ENCODE measurements at regions of chr3 and their contacts with region 1.

Region 1: DNA sequence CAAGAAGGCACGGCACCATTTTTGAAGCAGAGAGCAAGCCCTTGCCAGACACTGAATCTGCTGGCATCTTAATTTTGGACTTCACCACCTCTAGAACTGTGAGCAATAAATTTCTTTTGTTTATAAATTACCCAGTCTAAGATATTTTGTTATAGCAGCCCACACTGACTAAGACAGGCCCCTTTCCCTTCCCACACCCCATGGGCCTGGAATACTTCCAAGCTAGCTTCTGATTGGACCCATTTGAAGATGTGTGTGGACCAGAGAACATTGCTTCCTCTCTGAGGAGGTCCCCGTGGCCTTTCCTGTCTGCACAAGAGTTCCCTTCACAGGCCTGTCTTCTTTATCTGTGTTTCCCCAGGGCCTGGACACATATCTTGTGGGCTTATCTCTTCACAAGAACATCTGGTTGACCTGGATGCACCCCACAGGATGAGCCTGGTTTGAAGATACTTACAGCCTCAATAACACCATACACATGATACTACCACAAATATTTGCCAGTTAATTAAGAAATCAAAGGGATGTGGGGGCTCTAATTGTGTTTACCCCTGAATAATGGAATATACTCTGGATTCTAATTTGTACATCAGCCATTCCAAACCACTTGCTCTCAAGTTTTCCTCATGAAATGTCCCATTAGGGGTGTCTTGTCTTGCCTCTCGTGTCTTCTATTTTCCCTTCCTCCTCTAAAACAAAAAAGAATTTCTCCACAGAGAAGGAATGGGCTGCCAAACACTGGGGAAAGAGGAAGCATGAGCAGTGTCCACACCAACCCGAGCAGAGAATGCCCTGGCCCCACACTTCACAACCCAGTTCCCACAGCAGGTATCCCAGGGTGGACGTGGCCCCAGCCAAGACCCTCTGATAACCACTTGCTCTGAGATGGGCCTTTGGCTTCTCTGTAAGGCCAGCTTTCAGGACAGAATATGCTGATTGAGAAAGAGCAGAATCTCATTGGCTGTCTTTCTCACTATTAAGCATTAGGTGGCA is 42.5 kb downstream of the GLB1 start:
- DNase-seq: no peak
- H3K4me3 ChIP-seq: no peak overlapping the region
- H3K27ac ChIP-seq: no peak overlapping the region
- H3K4me1 ChIP-seq: no peaks in the 10 kb centered on the region
- H3K27me3 ChIP-seq: no peaks in the 10 kb centered on the region
- CTCF ChIP-seq: no peak
- POLR2A ChIP-seq: no peak

Region 2: GRCh38 chr3:32934150-32934742 is 120.2 kb before region 1 on chr3:
- intact Hi-C with region 1: no loop called
- DNase-seq: peak; percentile 29 to 39
- H3K4me3 ChIP-seq: no peak overlapping the region
- H3K27ac ChIP-seq: no peak overlapping the region
- H3K4me1 ChIP-seq: no peaks in the 10 kb centered on the region
- H3K27me3 ChIP-seq: no peaks in the 10 kb centered on the region
- CTCF ChIP-seq: peak; percentile 31 to 77 (median 56)
- POLR2A ChIP-seq: no peak

Region 3: DNA sequence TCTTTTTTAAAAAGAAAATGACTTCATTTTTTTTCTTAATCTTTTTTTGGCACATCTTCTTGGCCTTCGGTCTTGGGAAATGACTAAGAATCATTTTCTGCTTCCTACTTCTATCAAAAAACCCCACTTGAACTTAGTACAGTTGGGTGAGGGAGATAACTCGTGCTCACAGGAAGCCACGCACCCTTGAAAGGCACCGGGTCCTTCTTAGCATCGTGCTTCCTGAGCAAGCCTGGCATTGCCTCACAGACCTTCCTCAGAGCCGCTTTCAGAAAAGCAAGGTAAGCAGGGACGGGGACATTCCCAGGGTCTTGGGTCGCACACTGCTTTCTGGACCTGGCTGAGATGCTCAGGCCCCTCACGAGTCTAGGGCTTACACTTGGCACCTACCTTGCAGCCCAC is 103.0 kb before region 1 on chr3 and contains the start of gene CCR4:
- intact Hi-C with region 1: loop called (anchors 10 kb)
- DNase-seq: no peak
- H3K4me3 ChIP-seq: no peak within 1 kb of the TSS
- H3K27ac ChIP-seq: no peak within 1 kb of the TSS
- H3K4me1 ChIP-seq: no peaks in the 10 kb centered on the region
- H3K27me3 ChIP-seq: no peaks in the 10 kb centered on the region
- CTCF ChIP-seq: no peak
- POLR2A ChIP-seq: no peak
- total RNA-seq, gene CCR4: 0.13 to 0.88 TPM in 2 of 4 donors, not detected in the others

Measured in thyroid gland (tissue), 4 donors.